Endothelial cell of umbilical vein (primary cell): ENCODE measurements at regions of chr5 and their contacts with region 1.

Region 1: GRCh38 chr5:57650360-57651069 is 167.9 kb upstream of the ACTBL2 start:
- DNase-seq: peak; percentile 61
- H3K4me3 ChIP-seq: no peak overlapping the region
- H3K27ac ChIP-seq: no peak overlapping the region
- H3K4me1 ChIP-seq: peaks cover 5% of the 10 kb centered on the region
- H3K27me3 ChIP-seq: no peaks in the 10 kb centered on the region
- CTCF ChIP-seq: peak; percentile 62 to 83
- POLR2A ChIP-seq: no peak

Region 2: GRCh38 chr5:57626703-57627102 is 23.8 kb before region 1 on chr5:
- CTCF ChIA-PET with region 1: interaction called, 11 read pairs
- POLR2A ChIA-PET with region 1: no interaction called
- dilution Hi-C with region 1: no loop called
- intact Hi-C with region 1: no loop called
- DNase-seq: no peak
- H3K4me3 ChIP-seq: no peak overlapping the region
- H3K27ac ChIP-seq: no peak overlapping the region
- H3K4me1 ChIP-seq: no peaks in the 10 kb centered on the region
- H3K27me3 ChIP-seq: no peaks in the 10 kb centered on the region
- CTCF ChIP-seq: no peak
- POLR2A ChIP-seq: no peak

Region 3: DNA sequence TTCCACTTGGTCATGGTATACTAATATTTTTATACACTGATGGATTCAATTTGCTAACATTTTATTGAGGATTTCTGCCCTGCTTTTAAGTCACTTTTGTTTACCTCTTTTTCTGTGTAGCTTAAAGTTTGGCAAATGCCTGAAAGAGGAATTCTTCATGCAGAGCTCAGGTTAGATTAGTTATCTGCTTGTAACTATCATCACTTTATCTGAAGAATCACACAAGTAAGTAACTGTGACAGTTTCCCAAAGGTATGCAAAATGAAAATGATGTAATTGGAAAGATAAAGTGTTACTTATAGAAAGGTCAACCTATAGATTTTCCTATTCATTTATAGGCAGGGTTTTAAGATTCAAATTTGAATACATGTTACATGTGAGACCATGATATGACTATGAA is 20.9 kb after region 1 on chr5:
- CTCF ChIA-PET with region 1: interaction called, 16 read pairs
- POLR2A ChIA-PET with region 1: no interaction called
- dilution Hi-C with region 1: no loop called
- intact Hi-C with region 1: no loop called
- DNase-seq: no peak
- H3K4me3 ChIP-seq: no peak overlapping the region
- H3K27ac ChIP-seq: no peak overlapping the region
- H3K4me1 ChIP-seq: peaks cover 9% of the 10 kb centered on the region
- H3K27me3 ChIP-seq: no peaks in the 10 kb centered on the region
- CTCF ChIP-seq: no peak
- POLR2A ChIP-seq: no peak

Region 4: GRCh38 chr5:57698769-57699168 is 48.3 kb after region 1 on chr5:
- CTCF ChIA-PET with region 1: interaction called, 16 read pairs
- POLR2A ChIA-PET with region 1: no interaction called
- dilution Hi-C with region 1: no loop called
- intact Hi-C with region 1: no loop called
- DNase-seq: peak; percentile 75
- H3K4me3 ChIP-seq: no peak overlapping the region
- H3K27ac ChIP-seq: peak overlapping the region; percentile 60
- H3K4me1 ChIP-seq: peaks cover 29% of the 10 kb centered on the region
- H3K27me3 ChIP-seq: no peaks in the 10 kb centered on the region
- CTCF ChIP-seq: no peak
- POLR2A ChIP-seq: peak; percentile 15

Region 5: DNA sequence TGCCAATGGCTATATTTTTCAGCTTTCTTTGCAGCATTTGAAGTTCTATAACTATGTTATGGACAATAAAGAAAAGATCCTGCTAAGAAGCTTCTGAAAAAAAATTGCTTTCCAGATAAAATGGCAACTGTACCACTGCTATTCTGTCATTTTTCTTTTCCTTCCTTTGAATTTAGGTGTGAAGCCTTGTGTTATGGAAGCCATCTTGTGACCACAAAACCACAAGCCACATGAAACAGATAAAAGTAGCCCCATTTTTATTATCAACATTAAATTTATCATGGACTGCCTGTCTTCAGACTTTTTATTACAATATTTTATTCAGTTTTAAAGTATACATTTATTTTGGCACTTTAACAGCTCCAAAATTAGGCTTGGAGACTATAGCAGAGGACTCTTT is 122.0 kb after region 1 on chr5:
- CTCF ChIA-PET with region 1: interaction called, 154 read pairs
- POLR2A ChIA-PET with region 1: no interaction called
- dilution Hi-C with region 1: no loop called
- intact Hi-C with region 1: no loop called
- DNase-seq: no peak
- H3K4me3 ChIP-seq: no peak overlapping the region
- H3K27ac ChIP-seq: no peak overlapping the region
- H3K4me1 ChIP-seq: peaks cover 2% of the 10 kb centered on the region
- H3K27me3 ChIP-seq: no peaks in the 10 kb centered on the region
- CTCF ChIP-seq: no peak
- POLR2A ChIP-seq: no peak

Region 6: GRCh38 chr5:57887851-57888621 is 237.5 kb after region 1 on chr5:
- CTCF ChIA-PET with region 1: interaction called, 12 read pairs
- POLR2A ChIA-PET with region 1: no interaction called
- dilution Hi-C with region 1: no loop called
- intact Hi-C with region 1: no loop called
- DNase-seq: peak; percentile 73
- H3K4me3 ChIP-seq: no peak overlapping the region
- H3K27ac ChIP-seq: no peak overlapping the region
- H3K4me1 ChIP-seq: no peaks in the 10 kb centered on the region
- H3K27me3 ChIP-seq: no peaks in the 10 kb centered on the region
- CTCF ChIP-seq: peak; percentile 53 to 66
- POLR2A ChIP-seq: no peak

Region 7: GRCh38 chr5:57965351-57965750 is 314.8 kb after region 1 on chr5:
- CTCF ChIA-PET with region 1: no interaction called
- POLR2A ChIA-PET with region 1: no interaction called
- dilution Hi-C with region 1: no loop called
- intact Hi-C with region 1: no loop called
- DNase-seq: no peak
- H3K4me3 ChIP-seq: no peak overlapping the region
- H3K27ac ChIP-seq: no peak overlapping the region
- H3K4me1 ChIP-seq: no peaks in the 10 kb centered on the region
- H3K27me3 ChIP-seq: no peaks in the 10 kb centered on the region
- CTCF ChIP-seq: no peak
- POLR2A ChIP-seq: no peak